Activated T-helper 1 cell treated with anti-CD3 and anti-CD28 coated beads, Interleukin-12 subunit alpha, Interleukin-12 subunit beta, Interleukin-2, Interleukin-4 antibody, amounts not matched to agents 30 ng/mL and 10 ng/mL and 1 ng/mL, durations not matched to agents 14 hours and 24 hours and 36 hours (primary cell): ENCODE measurements at regions of chr12 and their contacts with region 1.

Region 1: DNA sequence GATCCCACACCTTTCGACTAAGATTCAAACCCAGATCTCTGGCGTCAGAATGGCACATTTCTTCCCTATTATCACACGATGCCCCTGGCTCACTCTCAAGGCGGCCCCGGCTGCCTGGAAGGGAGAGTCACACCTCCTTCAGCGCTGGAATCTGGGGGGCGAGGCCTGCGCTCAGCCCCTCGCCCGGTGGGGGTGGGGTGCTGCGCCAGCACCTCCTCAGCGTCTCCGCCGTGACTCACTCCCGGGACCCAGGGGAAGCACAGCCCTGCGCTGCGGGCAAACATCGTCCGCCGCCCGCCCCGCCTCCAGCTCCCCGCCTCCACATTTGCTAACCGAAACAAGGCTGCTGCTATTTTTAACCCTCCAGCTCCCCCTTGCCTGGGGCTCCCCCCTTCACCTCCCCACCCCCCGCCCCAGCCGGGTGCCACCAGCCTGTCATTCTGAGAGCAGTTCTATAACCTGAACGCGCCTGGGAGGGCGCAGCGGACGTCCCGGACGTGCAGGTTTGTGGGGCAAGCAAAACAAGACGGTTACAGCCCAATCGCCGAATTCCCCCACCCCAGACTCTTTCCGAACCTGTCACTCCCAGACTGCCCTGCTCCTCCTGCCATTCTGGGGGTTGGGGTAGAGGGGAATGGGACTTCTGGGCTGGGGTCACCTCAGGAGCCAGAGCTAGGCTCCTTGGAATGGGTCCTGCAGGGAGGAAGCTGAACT is 6.7 kb downstream of the HDAC7 start:
- DNase-seq: peak; percentile 92
- H3K4me3 Mint-ChIP-seq: peak overlapping the region; percentile 96
- H3K27ac Mint-ChIP-seq: peak overlapping the region; percentile 98
- H3K4me1 Mint-ChIP-seq: peaks cover 92% of the 10 kb centered on the region
- H3K27me3 Mint-ChIP-seq: no peaks in the 10 kb centered on the region

Region 2: DNA sequence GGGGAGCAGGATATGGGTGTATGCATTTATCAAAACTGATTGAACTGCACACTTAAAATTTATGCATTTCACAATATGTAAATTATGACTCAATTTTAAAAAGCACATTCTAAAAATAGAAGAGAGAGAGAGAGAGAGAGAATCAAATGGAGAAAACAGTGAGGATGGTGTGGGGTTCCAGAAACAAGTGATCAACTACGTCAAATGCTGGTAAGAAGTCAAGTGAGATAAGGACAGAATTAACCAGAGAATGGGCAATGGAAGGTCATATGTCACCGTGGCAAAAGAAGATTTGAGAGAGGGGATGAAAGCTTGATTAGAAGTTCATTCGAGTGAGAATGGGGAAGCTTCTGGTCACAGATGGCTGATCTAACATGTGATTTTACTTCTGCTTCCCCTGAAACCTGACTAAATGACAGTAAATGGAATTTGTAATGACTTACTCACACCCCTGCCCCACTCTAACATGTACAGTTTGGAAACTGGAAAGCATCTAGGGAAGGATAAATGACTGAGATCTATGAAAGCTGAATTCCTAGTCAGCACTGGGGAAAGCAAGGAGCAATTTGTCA is 456.7 kb before region 1 on chr12:
- intact Hi-C with region 1: loop called (anchors 10 kb)
- DNase-seq: no peak
- H3K4me3 Mint-ChIP-seq: peak overlapping the region; percentile 60
- H3K27ac Mint-ChIP-seq: peak overlapping the region; percentile 97
- H3K4me1 Mint-ChIP-seq: peaks cover 73% of the 10 kb centered on the region
- H3K27me3 Mint-ChIP-seq: no peaks in the 10 kb centered on the region

Region 3: DNA sequence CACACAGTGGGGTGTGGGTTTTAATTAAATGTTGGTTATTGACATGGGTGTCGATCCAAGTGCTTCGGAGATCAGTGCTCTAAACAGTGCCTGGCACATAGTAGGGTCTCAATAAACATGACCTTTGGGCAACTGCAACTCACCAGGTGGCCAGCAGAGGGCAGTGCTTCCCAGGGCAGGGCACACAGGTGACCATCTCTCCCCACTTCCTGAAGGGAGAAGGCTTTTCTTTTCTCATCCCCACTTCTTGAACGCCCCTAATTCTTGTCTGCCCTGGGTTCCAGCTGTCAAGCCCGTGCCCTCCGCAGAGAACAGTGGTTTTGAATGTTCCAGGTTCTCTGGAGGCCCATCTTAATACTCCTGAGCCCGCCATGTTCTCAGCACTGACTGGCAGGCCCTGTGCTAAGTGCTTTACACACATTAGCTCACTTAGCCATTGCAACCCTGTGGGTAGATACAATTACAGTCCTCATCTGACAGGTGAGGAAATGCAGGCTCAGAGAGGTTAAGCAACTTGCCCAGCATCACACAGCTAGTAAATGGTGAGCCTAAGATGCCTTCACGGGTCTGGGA is 70.6 kb before region 1 on chr12:
- intact Hi-C with region 1: no loop called
- DNase-seq: peak; percentile 61
- H3K4me3 Mint-ChIP-seq: no peak overlapping the region
- H3K27ac Mint-ChIP-seq: no peak overlapping the region
- H3K4me1 Mint-ChIP-seq: peaks cover 6% of the 10 kb centered on the region
- H3K27me3 Mint-ChIP-seq: peaks cover 17% of the 10 kb centered on the region

Region 4: GRCh38 chr12:47832263-47832933 is 19.4 kb after region 1 on chr12:
- intact Hi-C with region 1: loop called (anchors 1 kb)
- DNase-seq: no peak
- H3K4me3 Mint-ChIP-seq: peak overlapping the region; percentile 75
- H3K27ac Mint-ChIP-seq: peak overlapping the region; percentile 98
- H3K4me1 Mint-ChIP-seq: peaks cover 93% of the 10 kb centered on the region
- H3K27me3 Mint-ChIP-seq: no peaks in the 10 kb centered on the region

Region 5: GRCh38 chr12:47863467-47863866 is 50.5 kb after region 1 on chr12:
- intact Hi-C with region 1: loop called (anchors 1 kb)
- DNase-seq: no peak
- H3K4me3 Mint-ChIP-seq: no peak overlapping the region
- H3K27ac Mint-ChIP-seq: peak overlapping the region; percentile 80
- H3K4me1 Mint-ChIP-seq: peaks cover 92% of the 10 kb centered on the region
- H3K27me3 Mint-ChIP-seq: no peaks in the 10 kb centered on the region